ENCODE measurements at regions of chr14 and their contacts with region 1.

Region 1: GRCh38 chr14:102805371-102806246 is 28.4 kb downstream of the TRAF3 start:
- DNase-seq: peak; percentile 47
- H3K4me3 Mint-ChIP-seq: peak overlapping the region; percentile 71
- H3K27ac Mint-ChIP-seq: peak overlapping the region; percentile 95
- H3K4me1 Mint-ChIP-seq: peaks cover 64% of the 10 kb centered on the region
- H3K27me3 Mint-ChIP-seq: no peaks in the 10 kb centered on the region

Region 2: GRCh38 chr14:102795060-102795925 is 10.3 kb before region 1 on chr14:
- intact Hi-C with region 1: loop called (anchors 1 kb)
- DNase-seq: no peak
- H3K4me3 Mint-ChIP-seq: peak overlapping the region; percentile 54
- H3K27ac Mint-ChIP-seq: peak overlapping the region; percentile 78
- H3K4me1 Mint-ChIP-seq: peaks cover 56% of the 10 kb centered on the region
- H3K27me3 Mint-ChIP-seq: no peaks in the 10 kb centered on the region

Region 3: GRCh38 chr14:102882226-102882906 is 76.8 kb after region 1 on chr14:
- intact Hi-C with region 1: loop called (anchors 1 kb)
- DNase-seq: no peak
- H3K4me3 Mint-ChIP-seq: no peak overlapping the region
- H3K27ac Mint-ChIP-seq: peak overlapping the region; percentile 37
- H3K4me1 Mint-ChIP-seq: peaks cover 10% of the 10 kb centered on the region
- H3K27me3 Mint-ChIP-seq: no peaks in the 10 kb centered on the region

Measured in activated T-helper 1 cell treated with anti-CD3 and anti-CD28 coated beads, Interleukin-12 subunit alpha, Interleukin-12 subunit beta, Interleukin-2, Interleukin-4 antibody, amounts not matched to agents 30 ng/mL and 10 ng/mL and 1 ng/mL, durations not matched to agents 14 hours and 24 hours and 36 hours (primary cell).